Activated CD4-positive, alpha-beta T cell treated with anti-CD3 and anti-CD28 coated beads for 36 hours (primary cell): ENCODE measurements at regions of chr20 and their contacts with region 1.

Region 1: DNA sequence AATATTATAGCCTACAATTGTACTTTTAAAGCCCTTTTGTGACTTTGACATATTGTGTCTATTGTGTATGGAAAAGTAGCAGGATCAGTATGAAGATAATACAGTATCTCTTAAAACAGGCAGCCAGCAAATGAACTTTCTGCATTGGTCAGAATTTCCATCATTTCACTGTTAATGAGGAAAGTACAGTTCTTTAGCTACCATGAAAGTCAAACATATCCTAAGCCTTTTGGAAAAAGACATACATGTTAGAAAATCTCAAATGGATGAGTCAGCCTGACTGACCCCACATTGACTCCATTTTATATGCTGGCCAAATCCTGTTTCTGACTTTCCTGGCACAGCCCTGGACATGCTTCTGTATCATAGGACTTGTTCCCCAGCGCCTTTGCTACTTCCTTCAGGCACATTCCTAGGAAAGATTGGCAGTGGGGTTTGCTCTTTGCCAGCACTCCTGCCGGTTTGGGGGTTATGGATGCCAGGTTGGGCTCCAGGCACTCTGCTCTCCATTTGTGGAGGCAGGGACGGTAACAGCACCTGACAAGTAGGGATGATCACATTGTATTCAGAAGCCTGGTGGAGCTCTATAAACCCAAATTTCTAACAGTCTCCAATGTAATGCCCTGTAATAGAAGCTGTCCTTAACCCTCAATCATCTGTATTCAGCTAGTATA is 43.7 kb downstream of the TOP1 start:
- DNase-seq: no peak
- ATAC-seq: peak; percentile 31
- H3K4me3 Mint-ChIP-seq: no peak overlapping the region
- H3K27ac Mint-ChIP-seq: peak overlapping the region; percentile 70
- H3K4me1 Mint-ChIP-seq: peaks cover 79% of the 10 kb centered on the region
- H3K27me3 Mint-ChIP-seq: no peaks in the 10 kb centered on the region

Region 2: DNA sequence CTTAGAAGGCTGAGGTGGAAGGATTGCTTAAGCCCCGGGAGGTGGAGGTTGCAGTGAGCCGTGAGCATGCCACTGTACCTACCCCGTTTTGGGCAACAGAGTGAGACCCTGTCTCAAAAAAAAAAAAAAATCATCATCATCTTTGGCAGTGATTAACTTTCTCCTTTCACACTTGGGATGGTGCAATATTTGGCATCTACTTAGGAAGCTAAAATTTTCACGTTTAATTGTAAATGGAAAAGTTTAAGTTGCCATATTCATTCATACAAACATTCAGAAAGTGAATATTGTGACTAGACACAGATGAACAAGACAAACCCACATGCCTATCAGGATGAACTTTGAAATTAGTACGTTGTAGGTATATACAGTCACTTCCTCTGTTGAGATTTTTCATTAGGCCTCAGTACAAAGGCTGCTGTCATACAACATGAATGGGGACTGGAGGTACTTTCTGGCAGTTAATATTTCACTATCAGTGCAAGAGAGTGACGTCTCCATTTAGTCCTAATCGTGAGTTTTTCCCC is 33.4 kb before region 1 on chr20:
- CTCF ChIA-PET with region 1: interaction called, 3 read pairs
- POLR2A ChIA-PET with region 1: interaction called, 4 read pairs
- intact Hi-C with region 1: loop called in 1 of 2 experiments (anchors 5 kb)
- DNase-seq: no peak
- ATAC-seq: peak; percentile 96
- H3K4me3 Mint-ChIP-seq: no peak overlapping the region
- H3K27ac Mint-ChIP-seq: peak overlapping the region; percentile 79
- H3K4me1 Mint-ChIP-seq: peaks cover 86% of the 10 kb centered on the region
- H3K27me3 Mint-ChIP-seq: no peaks in the 10 kb centered on the region

Region 3: DNA sequence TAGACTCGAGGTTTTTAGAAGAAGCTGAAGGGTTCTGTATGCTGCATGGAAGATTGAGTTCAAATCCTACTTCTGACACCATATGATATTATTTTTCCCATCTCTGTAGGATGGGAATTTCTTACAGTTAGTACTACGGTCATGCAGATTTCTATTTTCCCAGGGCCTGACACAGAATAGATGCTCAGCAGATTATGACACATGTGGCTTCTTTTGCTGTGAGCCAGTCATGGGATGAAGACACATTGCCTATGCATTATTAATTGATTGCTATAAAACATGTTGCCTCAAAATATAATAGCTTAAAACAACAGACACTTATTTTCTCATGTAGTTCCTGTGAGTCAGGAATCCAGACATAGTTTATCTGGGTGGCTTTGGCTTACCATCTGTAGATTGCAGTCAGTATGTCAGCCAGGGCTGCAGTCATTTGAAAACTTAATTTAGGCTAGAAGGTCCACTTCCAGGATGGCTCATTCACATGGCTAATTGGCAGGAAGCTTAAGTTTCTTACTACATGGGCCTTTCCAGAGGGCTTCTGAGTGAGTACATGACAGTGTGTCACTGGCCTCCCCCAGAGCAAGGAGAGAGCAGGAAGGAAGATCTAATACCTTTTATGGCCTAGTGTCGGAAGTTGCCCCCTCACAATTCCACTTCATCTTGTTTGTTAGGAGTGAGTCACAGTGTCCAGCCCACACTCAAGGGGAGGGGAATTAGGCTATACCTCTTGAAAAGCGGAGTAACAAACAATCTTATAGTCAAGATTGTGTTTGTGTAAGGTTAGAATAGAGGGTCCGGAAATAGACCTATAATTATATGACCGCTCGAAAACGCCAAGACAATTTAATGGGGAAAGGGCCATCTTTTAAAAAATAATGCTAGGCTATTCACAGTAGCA is 14.1 kb before region 1 on chr20:
- CTCF ChIA-PET with region 1: no interaction called
- POLR2A ChIA-PET with region 1: interaction called, 13 read pairs
- intact Hi-C with region 1: no loop called
- DNase-seq: peak; percentile 55
- ATAC-seq: peak; percentile 93
- H3K4me3 Mint-ChIP-seq: no peak overlapping the region
- H3K27ac Mint-ChIP-seq: peak overlapping the region; percentile 40
- H3K4me1 Mint-ChIP-seq: peaks cover 60% of the 10 kb centered on the region
- H3K27me3 Mint-ChIP-seq: no peaks in the 10 kb centered on the region

Region 4: GRCh38 chr20:42963796-42964195 is 1891.5 kb after region 1 on chr20:
- CTCF ChIA-PET with region 1: no interaction called
- POLR2A ChIA-PET with region 1: no interaction called
- intact Hi-C with region 1: no loop called
- DNase-seq: no peak
- ATAC-seq: no peak
- H3K4me3 Mint-ChIP-seq: no peak overlapping the region
- H3K27ac Mint-ChIP-seq: no peak overlapping the region
- H3K4me1 Mint-ChIP-seq: no peaks in the 10 kb centered on the region
- H3K27me3 Mint-ChIP-seq: no peaks in the 10 kb centered on the region